WTC11 (cell line): ENCODE measurements at regions of chr12 and their contacts with region 1.

Region 1: DNA sequence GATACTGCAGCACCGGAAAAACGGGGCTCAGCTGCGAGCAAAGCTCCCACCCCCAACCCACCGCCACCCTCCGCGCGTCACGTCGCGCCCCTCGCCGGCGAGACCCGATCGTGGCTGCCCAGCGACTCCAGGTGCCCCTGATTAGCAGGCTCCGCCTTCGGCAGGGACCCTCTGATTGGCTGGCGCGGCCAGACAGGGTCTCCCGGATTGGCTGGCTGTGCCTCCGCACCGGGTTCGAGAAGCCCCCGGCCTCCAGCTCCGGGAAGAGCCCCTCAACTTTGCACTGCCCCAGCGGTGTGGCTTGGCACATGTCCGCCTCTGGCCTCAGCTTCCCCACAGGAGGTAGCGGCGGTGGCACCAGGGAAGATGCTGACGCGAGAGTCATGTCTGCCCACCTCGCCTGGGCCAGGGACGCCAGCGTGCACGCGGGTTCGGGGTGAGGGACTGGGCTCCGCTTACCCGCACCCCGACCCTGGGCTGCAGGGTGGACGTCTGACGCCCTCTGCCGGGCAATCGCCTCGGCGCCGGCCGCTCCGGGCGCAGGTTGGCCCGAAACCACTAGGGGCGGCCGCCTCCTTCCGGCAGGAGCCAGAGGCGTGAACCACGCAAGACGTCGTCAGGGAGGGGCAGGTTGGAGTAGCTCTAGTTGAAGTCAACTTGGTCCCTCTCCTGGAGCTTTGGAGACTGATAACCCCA is 498 bp upstream of the RHOF start:
- DNase-seq: peak; percentile 95
- ATAC-seq: peak; percentile 60
- H3K4me3 Mint-ChIP-seq: peak overlapping the region; percentile 71
- H3K27ac Mint-ChIP-seq: peak overlapping the region; percentile 90
- H3K4me1 Mint-ChIP-seq: peaks cover 49% of the 10 kb centered on the region
- H3K27me3 Mint-ChIP-seq: no peaks in the 10 kb centered on the region; the same call in 1 of the 2 replicates
- CTCF ChIP-seq: peak; percentile 87

Region 2: DNA sequence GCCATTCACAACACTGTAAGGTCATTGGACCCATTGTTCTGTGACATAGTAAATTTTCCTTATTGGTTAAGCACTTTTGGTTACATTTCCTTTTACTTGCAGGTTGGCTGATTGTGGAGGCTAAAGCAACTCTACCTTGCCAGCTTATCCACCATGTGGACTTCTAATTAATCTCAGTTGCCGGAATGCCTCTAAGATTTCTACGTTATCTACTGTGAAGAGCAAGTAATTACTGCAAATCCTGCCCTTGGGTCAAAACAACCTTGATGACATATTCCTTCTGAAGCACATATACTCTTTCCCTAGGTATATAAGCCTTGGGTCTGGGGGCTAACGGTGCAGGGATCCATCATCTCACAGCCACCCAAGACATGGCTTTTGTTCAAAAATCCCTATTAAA is 105.0 kb before region 1 on chr12:
- CTCF ChIA-PET with region 1: interaction called, 27 read pairs
- POLR2A ChIA-PET with region 1: no interaction called
- DNase-seq: no peak
- ATAC-seq: no peak
- H3K4me3 Mint-ChIP-seq: no peak overlapping the region
- H3K27ac Mint-ChIP-seq: no peak overlapping the region; the same call in 1 of the 2 replicates
- H3K4me1 Mint-ChIP-seq: peaks cover 5% of the 10 kb centered on the region; the same call in 1 of the 2 replicates
- H3K27me3 Mint-ChIP-seq: no peaks in the 10 kb centered on the region
- CTCF ChIP-seq: no peak

Region 3: DNA sequence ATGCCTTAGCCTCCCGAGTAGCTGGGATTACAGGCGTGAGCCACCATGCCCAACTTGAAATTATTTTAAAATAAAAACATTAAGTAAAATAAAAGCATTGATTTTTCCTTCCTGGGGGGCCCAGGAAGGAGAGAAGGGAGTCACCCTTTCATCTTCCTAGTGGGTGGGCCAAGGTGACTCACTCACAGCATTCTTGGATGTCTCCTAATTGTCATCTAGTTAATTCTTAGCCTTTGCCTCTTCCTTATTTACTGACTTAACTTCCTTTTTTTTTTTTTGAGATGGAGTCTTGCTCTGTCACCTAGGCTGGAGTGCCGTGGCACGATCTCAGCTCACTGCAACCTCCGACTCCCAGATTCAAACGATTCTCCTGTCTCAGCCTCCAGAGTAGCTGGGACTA is 52.2 kb before region 1 on chr12:
- CTCF ChIA-PET with region 1: no interaction called
- POLR2A ChIA-PET with region 1: no interaction called
- DNase-seq: no peak
- ATAC-seq: no peak
- H3K4me3 Mint-ChIP-seq: no peak overlapping the region
- H3K27ac Mint-ChIP-seq: peak overlapping the region; percentile 95
- H3K4me1 Mint-ChIP-seq: peaks cover 2% of the 10 kb centered on the region; the same call in 1 of the 2 replicates
- H3K27me3 Mint-ChIP-seq: no peaks in the 10 kb centered on the region
- CTCF ChIP-seq: no peak

Region 4: GRCh38 chr12:121762269-121762668 is 31.7 kb before region 1 on chr12:
- CTCF ChIA-PET with region 1: interaction called, 18 read pairs
- POLR2A ChIA-PET with region 1: no interaction called
- DNase-seq: no peak
- ATAC-seq: no peak
- H3K4me3 Mint-ChIP-seq: no peak overlapping the region
- H3K27ac Mint-ChIP-seq: peak overlapping the region; percentile 15
- H3K4me1 Mint-ChIP-seq: no peaks in the 10 kb centered on the region
- H3K27me3 Mint-ChIP-seq: no peaks in the 10 kb centered on the region; the same call in 1 of the 2 replicates
- CTCF ChIP-seq: no peak

Region 5: GRCh38 chr12:121823101-121823726 is 29.2 kb after region 1 on chr12:
- CTCF ChIA-PET with region 1: interaction called, 46 read pairs
- POLR2A ChIA-PET with region 1: interaction called, 3 read pairs
- DNase-seq: no peak
- ATAC-seq: peak; percentile 48; the same call in 1 of the 2 replicates
- H3K4me3 Mint-ChIP-seq: no peak overlapping the region
- H3K27ac Mint-ChIP-seq: no peak overlapping the region
- H3K4me1 Mint-ChIP-seq: no peaks in the 10 kb centered on the region
- H3K27me3 Mint-ChIP-seq: no peaks in the 10 kb centered on the region
- CTCF ChIP-seq: no peak

Region 6: DNA sequence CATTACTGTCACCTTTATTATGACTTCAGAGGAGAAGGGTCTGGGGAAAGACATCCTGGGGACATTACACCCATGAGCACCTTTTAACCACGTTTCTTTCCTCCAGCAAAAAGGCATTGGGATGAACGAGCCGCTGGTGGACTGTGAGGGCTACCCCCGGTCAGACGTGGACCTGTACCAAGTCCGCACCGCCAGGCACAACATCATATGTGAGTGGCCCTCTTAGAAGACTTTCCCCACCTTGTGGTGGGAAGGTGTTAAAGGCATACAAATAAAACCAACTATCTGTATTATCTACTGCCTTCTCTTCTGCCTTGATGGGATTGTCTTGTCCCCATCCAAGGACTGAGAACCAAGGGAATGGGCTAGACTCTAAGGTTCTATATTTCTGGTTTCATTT is 100.6 kb after region 1 on chr12:
- CTCF ChIA-PET with region 1: interaction called, 68 read pairs
- POLR2A ChIA-PET with region 1: interaction called, 6 read pairs
- DNase-seq: peak; percentile 30
- ATAC-seq: peak; percentile 86
- H3K4me3 Mint-ChIP-seq: no peak overlapping the region
- H3K27ac Mint-ChIP-seq: no peak overlapping the region
- H3K4me1 Mint-ChIP-seq: peaks cover 14% of the 10 kb centered on the region
- H3K27me3 Mint-ChIP-seq: peaks cover 8% of the 10 kb centered on the region
- CTCF ChIP-seq: 0 out of 2 replicates have a peak, but pooled peaks have one; percentile 18

Region 7: GRCh38 chr12:122028165-122028904 is 234.3 kb after region 1 on chr12:
- CTCF ChIA-PET with region 1: interaction called, 12 read pairs
- POLR2A ChIA-PET with region 1: no interaction called
- DNase-seq: no peak
- ATAC-seq: no peak
- H3K4me3 Mint-ChIP-seq: no peak overlapping the region
- H3K27ac Mint-ChIP-seq: peak overlapping the region; percentile 45; the same call in 1 of the 2 replicates
- H3K4me1 Mint-ChIP-seq: peaks cover 29% of the 10 kb centered on the region
- H3K27me3 Mint-ChIP-seq: peaks cover 3% of the 10 kb centered on the region
- CTCF ChIP-seq: no peak